ENCODE measurements at regions of chr2 and their contacts with region 1.

Region 1: DNA sequence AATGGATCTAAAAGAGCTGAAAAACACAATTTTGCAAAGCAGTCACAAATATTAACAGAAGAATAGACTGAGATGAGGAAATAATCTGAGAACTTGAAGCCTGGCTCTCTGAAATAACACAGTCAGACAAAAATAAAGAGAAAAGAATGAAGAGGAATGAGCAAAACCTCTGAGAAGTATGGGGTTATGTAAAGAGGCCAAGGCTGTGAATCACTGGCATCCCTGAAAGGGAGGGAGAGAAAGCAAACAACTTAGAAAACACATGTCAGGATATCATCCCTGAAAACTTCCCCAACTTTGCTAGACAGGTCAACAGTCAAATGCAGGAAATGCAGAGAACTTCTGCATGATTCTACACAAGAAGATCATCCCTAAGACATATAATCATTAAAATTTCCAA is 73.5 kb upstream of the LHCGR start:
- DNase-seq: no peak
- H3K4me3 ChIP-seq: no peak overlapping the region
- H3K27ac ChIP-seq: no peak overlapping the region
- H3K4me1 ChIP-seq: no peaks in the 10 kb centered on the region
- H3K27me3 ChIP-seq: no peaks in the 10 kb centered on the region
- CTCF ChIP-seq: no peak

Region 2: GRCh38 chr2:48781366-48781765 is 47.7 kb before region 1 on chr2:
- CTCF ChIA-PET with region 1: no interaction called
- POLR2A ChIA-PET with region 1: interaction called, 10 read pairs
- intact Hi-C with region 1: no loop called
- DNase-seq: peak; percentile 15
- H3K4me3 ChIP-seq: no peak overlapping the region
- H3K27ac ChIP-seq: no peak overlapping the region
- H3K4me1 ChIP-seq: no peaks in the 10 kb centered on the region
- H3K27me3 ChIP-seq: no peaks in the 10 kb centered on the region
- CTCF ChIP-seq: no peak

Region 3: GRCh38 chr2:50273003-50273402 is 1444.0 kb after region 1 on chr2:
- CTCF ChIA-PET with region 1: no interaction called
- POLR2A ChIA-PET with region 1: no interaction called
- intact Hi-C with region 1: no loop called
- DNase-seq: no peak
- H3K4me3 ChIP-seq: no peak overlapping the region
- H3K27ac ChIP-seq: no peak overlapping the region
- H3K4me1 ChIP-seq: no peaks in the 10 kb centered on the region
- H3K27me3 ChIP-seq: no peaks in the 10 kb centered on the region
- CTCF ChIP-seq: no peak

Region 4: DNA sequence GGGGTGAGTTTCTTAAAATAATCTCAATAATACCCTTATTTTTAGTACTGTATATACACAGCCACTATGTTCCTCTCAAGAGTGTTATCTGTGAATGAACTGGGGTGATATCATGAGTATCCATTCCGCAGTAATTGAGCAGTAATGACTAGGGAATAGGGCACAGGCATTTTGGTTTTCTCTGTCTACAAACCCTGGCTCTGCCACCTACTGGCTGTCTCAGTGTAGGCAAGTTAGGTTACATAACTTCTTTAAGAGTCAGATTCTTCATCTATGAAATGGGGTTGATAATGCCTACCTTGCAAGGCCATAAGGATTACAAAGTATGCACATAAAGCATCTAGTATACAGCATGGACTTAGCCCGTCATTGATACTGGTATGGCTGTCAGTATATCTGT is 1647.1 kb after region 1 on chr2:
- CTCF ChIA-PET with region 1: no interaction called
- POLR2A ChIA-PET with region 1: interaction called, 23 read pairs
- intact Hi-C with region 1: no loop called
- DNase-seq: peak; percentile 18
- H3K4me3 ChIP-seq: no peak overlapping the region
- H3K27ac ChIP-seq: no peak overlapping the region
- H3K4me1 ChIP-seq: no peaks in the 10 kb centered on the region
- H3K27me3 ChIP-seq: no peaks in the 10 kb centered on the region
- CTCF ChIP-seq: peak; percentile 49

Measured in A673 (cell line).